PC-3 (cell line): ENCODE measurements at regions of chr6 and their contacts with region 1.

Region 1: DNA sequence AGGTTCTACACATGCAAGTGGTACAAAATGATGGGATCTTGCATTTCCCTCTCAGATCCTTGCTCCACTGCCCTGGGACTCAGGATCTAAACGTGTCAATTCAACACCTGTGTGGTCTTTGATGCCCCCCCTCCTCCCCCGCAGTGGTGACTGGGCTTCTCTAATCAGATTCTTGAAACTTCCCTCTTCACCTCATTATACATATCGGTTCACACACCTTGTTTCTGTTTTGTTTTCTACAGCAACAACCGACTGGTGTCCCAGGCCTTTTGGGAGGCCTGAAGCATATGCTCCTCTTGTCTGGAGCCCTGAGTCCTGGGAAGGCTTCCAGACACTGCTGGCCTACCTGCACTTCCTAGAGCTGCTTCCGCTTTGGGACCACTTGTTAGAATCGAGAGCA is 20.0 kb downstream of the SAMD3 start:
- DNase-seq: no peak
- ATAC-seq: no peak
- H3K4me3 ChIP-seq: no peak overlapping the region
- H3K27ac ChIP-seq: no peak overlapping the region
- H3K4me1 ChIP-seq: no peaks in the 10 kb centered on the region
- H3K27me3 ChIP-seq: no peaks in the 10 kb centered on the region
- CTCF ChIP-seq: no peak

Region 2: GRCh38 chr6:130269969-130270635 is 67.3 kb after region 1 on chr6:
- CTCF ChIA-PET with region 1: no interaction called
- POLR2A ChIA-PET with region 1: no interaction called
- intact Hi-C with region 1: no loop called
- DNase-seq: no peak
- ATAC-seq: no peak
- H3K4me3 ChIP-seq: no peak overlapping the region
- H3K27ac ChIP-seq: no peak overlapping the region
- H3K4me1 ChIP-seq: no peaks in the 10 kb centered on the region
- H3K27me3 ChIP-seq: no peaks in the 10 kb centered on the region
- CTCF ChIP-seq: no peak

Region 3: DNA sequence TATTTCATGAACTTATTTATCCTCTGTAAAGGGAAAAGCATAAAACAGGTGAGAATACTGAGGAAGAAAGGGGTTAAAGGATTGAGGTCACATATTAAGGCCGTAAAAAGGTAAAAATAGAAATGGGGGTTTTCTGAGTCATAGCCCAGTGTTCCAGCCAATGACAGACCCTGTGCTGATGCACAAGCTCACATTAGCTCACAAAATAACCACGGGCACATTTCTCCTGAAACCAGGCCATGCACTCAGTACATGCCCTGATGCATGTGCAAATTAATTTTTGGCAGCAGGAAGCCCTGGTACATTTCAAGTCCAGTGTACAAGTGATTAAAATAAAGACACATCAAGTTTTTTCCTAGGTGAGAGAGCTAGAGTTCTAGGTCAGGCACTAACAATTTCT is 357.4 kb after region 1 on chr6:
- CTCF ChIA-PET with region 1: no interaction called
- POLR2A ChIA-PET with region 1: no interaction called
- intact Hi-C with region 1: no loop called
- DNase-seq: no peak
- ATAC-seq: no peak
- H3K4me3 ChIP-seq: no peak overlapping the region
- H3K27ac ChIP-seq: no peak overlapping the region
- H3K4me1 ChIP-seq: no peaks in the 10 kb centered on the region
- H3K27me3 ChIP-seq: no peaks in the 10 kb centered on the region
- CTCF ChIP-seq: no peak

Region 4: DNA sequence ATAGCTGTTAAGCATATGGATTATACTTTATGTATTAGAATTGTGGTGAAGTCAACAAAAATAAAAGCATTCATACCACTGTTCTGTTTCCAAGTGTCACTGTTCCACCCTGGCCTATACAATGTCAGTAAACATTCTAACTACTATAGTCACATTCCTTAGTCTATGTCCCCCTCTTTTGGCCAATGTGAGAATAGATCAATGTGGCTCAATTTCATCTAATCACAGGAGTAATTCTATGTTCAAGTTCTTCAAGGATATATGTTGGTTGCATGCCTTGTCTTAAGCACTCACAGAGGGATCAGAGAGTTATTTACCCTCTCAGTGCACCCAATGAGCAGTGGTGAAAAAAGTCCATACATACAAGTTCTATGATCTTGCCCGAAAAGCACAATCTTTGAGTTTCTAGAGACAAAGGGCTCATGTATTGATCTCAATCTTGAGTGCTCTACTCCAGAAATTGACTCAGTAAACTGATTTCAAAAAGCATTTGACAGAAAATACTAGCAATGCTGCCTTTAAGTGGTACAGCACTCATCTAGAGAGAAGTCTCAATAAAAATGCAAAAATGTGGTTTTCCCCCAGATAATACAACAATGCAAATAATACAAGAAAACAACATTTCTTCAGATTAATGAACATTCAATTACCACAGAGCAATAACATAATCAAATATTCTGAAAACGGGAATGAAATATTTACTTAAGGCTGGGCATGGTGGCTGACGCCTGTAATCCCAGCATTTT is 641.0 kb after region 1 on chr6:
- CTCF ChIA-PET with region 1: interaction called, 14 read pairs
- POLR2A ChIA-PET with region 1: no interaction called
- intact Hi-C with region 1: no loop called
- DNase-seq: peak; percentile 53
- ATAC-seq: peak; percentile 56
- H3K4me3 ChIP-seq: no peak overlapping the region
- H3K27ac ChIP-seq: no peak overlapping the region
- H3K4me1 ChIP-seq: no peaks in the 10 kb centered on the region
- H3K27me3 ChIP-seq: no peaks in the 10 kb centered on the region
- CTCF ChIP-seq: peak; percentile 61